ENCODE measurements at regions of chr6 and their contacts with region 1.

Region 1: GRCh38 chr6:56699066-56699654 is 56.5 kb upstream of the DST start:
- DNase-seq: peak; percentile 46
- H3K4me3 Mint-ChIP-seq: no peak overlapping the region
- H3K27ac Mint-ChIP-seq: no peak overlapping the region
- H3K4me1 Mint-ChIP-seq: peaks cover 16% of the 10 kb centered on the region
- H3K27me3 Mint-ChIP-seq: no peaks in the 10 kb centered on the region
- CTCF ChIP-seq: peak; percentile 37

Region 2: GRCh38 chr6:56618050-56618449 is 81.1 kb before region 1 on chr6:
- CTCF ChIA-PET with region 1: interaction called, 4 read pairs
- POLR2A ChIA-PET with region 1: interaction called, 18 read pairs
- intact Hi-C with region 1: no loop called
- DNase-seq: no peak
- H3K4me3 Mint-ChIP-seq: no peak overlapping the region
- H3K27ac Mint-ChIP-seq: no peak overlapping the region
- H3K4me1 Mint-ChIP-seq: no peaks in the 10 kb centered on the region
- H3K27me3 Mint-ChIP-seq: no peaks in the 10 kb centered on the region
- CTCF ChIP-seq: peak; percentile 14

Region 3: GRCh38 chr6:56624046-56624727 is 75.0 kb before region 1 on chr6:
- CTCF ChIA-PET with region 1: interaction called, 9 read pairs
- POLR2A ChIA-PET with region 1: interaction called, 10 read pairs
- intact Hi-C with region 1: no loop called
- DNase-seq: no peak
- H3K4me3 Mint-ChIP-seq: no peak overlapping the region
- H3K27ac Mint-ChIP-seq: no peak overlapping the region
- H3K4me1 Mint-ChIP-seq: peaks cover 6% of the 10 kb centered on the region
- H3K27me3 Mint-ChIP-seq: no peaks in the 10 kb centered on the region
- CTCF ChIP-seq: no peak

Region 4: GRCh38 chr6:56659721-56660380 is 39.3 kb before region 1 on chr6:
- CTCF ChIA-PET with region 1: interaction called, 5 read pairs
- POLR2A ChIA-PET with region 1: interaction called, 395 read pairs
- intact Hi-C with region 1: no loop called
- DNase-seq: peak; percentile 42
- H3K4me3 Mint-ChIP-seq: peak overlapping the region; percentile 2
- H3K27ac Mint-ChIP-seq: peak overlapping the region; percentile 95
- H3K4me1 Mint-ChIP-seq: peaks cover 61% of the 10 kb centered on the region
- H3K27me3 Mint-ChIP-seq: no peaks in the 10 kb centered on the region
- CTCF ChIP-seq: no peak

Region 5: GRCh38 chr6:56671651-56672461 is 27.3 kb before region 1 on chr6:
- CTCF ChIA-PET with region 1: interaction called, 13 read pairs
- POLR2A ChIA-PET with region 1: interaction called, 395 read pairs
- intact Hi-C with region 1: no loop called
- DNase-seq: no peak
- H3K4me3 Mint-ChIP-seq: no peak overlapping the region
- H3K27ac Mint-ChIP-seq: peak overlapping the region; percentile 73
- H3K4me1 Mint-ChIP-seq: peaks cover 17% of the 10 kb centered on the region
- H3K27me3 Mint-ChIP-seq: no peaks in the 10 kb centered on the region
- CTCF ChIP-seq: no peak

Region 6: GRCh38 chr6:56757588-56757984 is 58.4 kb after region 1 on chr6:
- CTCF ChIA-PET with region 1: interaction called, 404 read pairs
- POLR2A ChIA-PET with region 1: interaction called, 5 read pairs
- intact Hi-C with region 1: no loop called
- DNase-seq: peak; percentile 69
- H3K4me3 Mint-ChIP-seq: no peak overlapping the region
- H3K27ac Mint-ChIP-seq: no peak overlapping the region
- H3K4me1 Mint-ChIP-seq: peaks cover 21% of the 10 kb centered on the region
- H3K27me3 Mint-ChIP-seq: no peaks in the 10 kb centered on the region
- CTCF ChIP-seq: peak; percentile 66